ENCODE measurements at regions of chr1 and their contacts with region 1.

Region 1: GRCh38 chr1:21232044-21232443 is 55.3 kb upstream of the EIF4G3 start:
- DNase-seq: no peak
- ATAC-seq: peak; percentile 77
- H3K4me3 ChIP-seq: no peak overlapping the region
- H3K27ac ChIP-seq: no peak overlapping the region
- H3K4me1 ChIP-seq: no peaks in the 10 kb centered on the region
- H3K27me3 ChIP-seq: no peaks in the 10 kb centered on the region
- CTCF ChIP-seq: peak; percentile 59 to 75 (median 73)
- EP300 ChIP-seq: no peak
- POLR2A ChIP-seq: no peak
- RAD21 ChIP-seq: peak; percentile 82

Region 2: GRCh38 chr1:21201650-21202049 is 30.4 kb before region 1 on chr1:
- CTCF ChIA-PET with region 1: no interaction called
- POLR2A ChIA-PET with region 1: no interaction called
- RAD21 ChIA-PET with region 1: no interaction called
- SMC1A ChIA-PET with region 1: no interaction called
- in situ Hi-C with region 1: no loop called
- intact Hi-C with region 1: no loop called
- DNase-seq: no peak
- ATAC-seq: no peak
- H3K4me3 ChIP-seq: no peak overlapping the region
- H3K27ac ChIP-seq: no peak overlapping the region
- H3K4me1 ChIP-seq: no peaks in the 10 kb centered on the region
- H3K27me3 ChIP-seq: no peaks in the 10 kb centered on the region
- CTCF ChIP-seq: no peak
- EP300 ChIP-seq: no peak
- POLR2A ChIP-seq: no peak
- RAD21 ChIP-seq: no peak

Region 3: GRCh38 chr1:21216835-21217811 is 14.9 kb before region 1 on chr1:
- CTCF ChIA-PET with region 1: interaction called, 22 read pairs
- POLR2A ChIA-PET with region 1: no interaction called
- RAD21 ChIA-PET with region 1: no interaction called
- SMC1A ChIA-PET with region 1: interaction called, 3 read pairs
- in situ Hi-C with region 1: no loop called
- intact Hi-C with region 1: no loop called
- DNase-seq: no peak
- ATAC-seq: peak; percentile 87
- H3K4me3 ChIP-seq: no peak overlapping the region
- H3K27ac ChIP-seq: no peak overlapping the region
- H3K4me1 ChIP-seq: peaks cover 4% of the 10 kb centered on the region
- H3K27me3 ChIP-seq: no peaks in the 10 kb centered on the region
- CTCF ChIP-seq: peak; percentile 63 to 84 (median 80)
- EP300 ChIP-seq: no peak
- POLR2A ChIP-seq: 0 out of 2 replicates have a peak, but pooled peaks have one; percentile 25
- RAD21 ChIP-seq: peak; percentile 59

Region 4: GRCh38 chr1:21244986-21245687 is 13.1 kb after region 1 on chr1:
- CTCF ChIA-PET with region 1: interaction called, 12 read pairs
- POLR2A ChIA-PET with region 1: no interaction called
- RAD21 ChIA-PET with region 1: no interaction called
- SMC1A ChIA-PET with region 1: interaction called, 7 read pairs
- in situ Hi-C with region 1: no loop called
- intact Hi-C with region 1: no loop called
- DNase-seq: no peak
- ATAC-seq: peak; percentile 53; the same call in 2 of the 3 replicates
- H3K4me3 ChIP-seq: no peak overlapping the region
- H3K27ac ChIP-seq: no peak overlapping the region
- H3K4me1 ChIP-seq: no peaks in the 10 kb centered on the region
- H3K27me3 ChIP-seq: no peaks in the 10 kb centered on the region
- CTCF ChIP-seq: peak in 2 of 3 experiments; percentile 44 to 52; a peak in 4 of 6 replicates
- EP300 ChIP-seq: no peak
- POLR2A ChIP-seq: no peak
- RAD21 ChIP-seq: no peak

Measured in GM12878 (cell line).